ENCODE measurements at regions of chr1 and their contacts with region 1.

Region 1: GRCh38 chr1:204516180-204516879 is at the start of gene MDM4:
- DNase-seq: peak; percentile 91
- ATAC-seq: peak; percentile 80
- H3K4me3 Mint-ChIP-seq: no peak within 1 kb of the TSS
- H3K27ac Mint-ChIP-seq: no peak within 1 kb of the TSS
- H3K4me1 Mint-ChIP-seq: peaks cover 80% of the 10 kb centered on the region
- H3K27me3 Mint-ChIP-seq: no peaks in the 10 kb centered on the region
- CTCF ChIP-seq: no peak
- total RNA-seq, gene MDM4: 221 and 264 TPM in 2 replicates

Region 2: DNA sequence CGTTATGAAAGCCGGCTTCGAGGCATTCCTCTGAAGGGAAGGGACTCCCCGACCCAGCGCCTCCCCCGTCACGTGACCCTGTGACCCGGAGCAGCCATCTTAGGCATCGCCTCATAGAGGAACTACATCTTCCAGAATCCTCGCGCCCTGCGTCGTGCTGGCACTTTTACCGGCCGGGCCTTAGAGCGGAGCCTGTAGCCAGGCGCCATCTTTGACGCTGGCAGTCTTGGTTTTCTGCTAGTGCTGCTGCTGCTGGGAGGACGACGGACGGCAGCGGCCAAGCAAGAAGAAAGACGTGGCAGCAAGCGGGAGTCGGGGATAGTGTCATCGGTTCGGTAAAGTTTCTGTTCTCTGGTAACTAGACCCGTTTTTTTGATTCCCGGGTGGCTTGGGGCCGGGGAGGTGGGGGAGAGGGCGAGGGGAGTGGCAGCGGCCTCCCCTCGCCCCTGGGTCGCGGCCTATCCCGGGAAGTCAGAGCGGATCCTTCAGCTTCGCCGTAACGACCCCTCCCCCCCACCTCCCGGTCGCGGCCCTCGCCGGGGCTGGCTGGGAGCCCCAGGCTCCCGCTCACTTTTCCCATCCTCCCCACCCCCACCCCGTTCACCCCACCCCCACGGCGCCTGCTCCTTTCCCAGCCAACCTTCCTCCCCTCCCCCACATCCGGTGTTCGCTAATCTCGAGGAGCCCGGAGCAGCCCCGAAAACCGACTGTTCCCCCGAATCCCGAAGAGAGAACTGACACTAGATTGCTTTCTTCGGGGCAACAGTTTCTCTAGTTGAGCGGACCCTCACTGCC is 720.7 kb before region 1 on chr1 and contains the starts of genes ZBED6 and ZC3H11A:
- CTCF ChIA-PET with region 1: no interaction called
- POLR2A ChIA-PET with region 1: no interaction called
- intact Hi-C with region 1: loop called (anchors 10 kb)
- DNase-seq: peak; percentile 90
- ATAC-seq: peak; percentile 97
- H3K4me3 Mint-ChIP-seq: peak within 1 kb of the TSS; percentile 99
- H3K27ac Mint-ChIP-seq: peak within 1 kb of the TSS; percentile 95
- H3K4me1 Mint-ChIP-seq: peaks cover 51% of the 10 kb centered on the region
- H3K27me3 Mint-ChIP-seq: no peaks in the 10 kb centered on the region
- CTCF ChIP-seq: no peak
- total RNA-seq, gene ZBED6: 26.3 and 31.4 TPM in 2 replicates
- total RNA-seq, gene ZC3H11A: 85.6 and 91.6 TPM in 2 replicates

Region 3: GRCh38 chr1:204411451-204412204 is 104.7 kb before region 1 on chr1 and contains the start of gene PPP1R15B:
- CTCF ChIA-PET with region 1: no interaction called
- POLR2A ChIA-PET with region 1: interaction called, 6 read pairs
- intact Hi-C with region 1: loop called (anchors 1 kb)
- DNase-seq: peak; percentile 96
- ATAC-seq: peak; percentile 89
- H3K4me3 Mint-ChIP-seq: peak within 1 kb of the TSS; percentile 99
- H3K27ac Mint-ChIP-seq: peak within 1 kb of the TSS; percentile 99
- H3K4me1 Mint-ChIP-seq: peaks cover 29% of the 10 kb centered on the region
- H3K27me3 Mint-ChIP-seq: no peaks in the 10 kb centered on the region
- CTCF ChIP-seq: no peak
- total RNA-seq, gene PPP1R15B: 60.4 and 70.6 TPM in 2 replicates

Region 4: GRCh38 chr1:204453141-204453772 is 63.1 kb before region 1 on chr1:
- CTCF ChIA-PET with region 1: no interaction called
- POLR2A ChIA-PET with region 1: interaction called, 51 read pairs
- intact Hi-C with region 1: no loop called
- DNase-seq: peak; percentile 54
- ATAC-seq: peak; percentile 90
- H3K4me3 Mint-ChIP-seq: peak overlapping the region; percentile 69
- H3K27ac Mint-ChIP-seq: peak overlapping the region; percentile 88
- H3K4me1 Mint-ChIP-seq: peaks cover 96% of the 10 kb centered on the region
- H3K27me3 Mint-ChIP-seq: no peaks in the 10 kb centered on the region
- CTCF ChIP-seq: no peak

Region 5: DNA sequence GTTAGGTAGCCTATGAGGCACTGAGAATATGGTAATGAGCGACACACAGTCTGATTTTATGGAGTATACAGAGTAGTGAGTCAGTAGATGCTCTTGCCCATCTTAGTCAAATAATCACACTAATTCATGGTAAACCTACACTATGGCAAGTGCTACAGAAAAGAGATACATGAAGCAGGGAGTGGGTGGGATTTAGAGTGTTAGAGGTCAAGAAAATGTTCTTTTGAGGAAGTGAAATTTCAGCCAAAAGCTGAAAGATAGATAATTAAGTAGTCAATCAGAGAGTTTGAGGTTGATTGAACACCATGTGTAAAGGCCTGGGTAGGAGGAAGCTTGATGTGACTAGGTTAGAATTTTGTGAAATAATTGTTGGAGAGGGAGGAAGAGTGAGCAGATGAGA is 14.6 kb after region 1 on chr1:
- CTCF ChIA-PET with region 1: interaction called, 5 read pairs
- POLR2A ChIA-PET with region 1: interaction called, 71 read pairs
- intact Hi-C with region 1: loop called (anchors 1 kb)
- DNase-seq: no peak
- ATAC-seq: peak; percentile 86
- H3K4me3 Mint-ChIP-seq: no peak overlapping the region
- H3K27ac Mint-ChIP-seq: peak overlapping the region; percentile 55
- H3K4me1 Mint-ChIP-seq: peaks cover 26% of the 10 kb centered on the region
- H3K27me3 Mint-ChIP-seq: no peaks in the 10 kb centered on the region
- CTCF ChIP-seq: no peak

Region 6: DNA sequence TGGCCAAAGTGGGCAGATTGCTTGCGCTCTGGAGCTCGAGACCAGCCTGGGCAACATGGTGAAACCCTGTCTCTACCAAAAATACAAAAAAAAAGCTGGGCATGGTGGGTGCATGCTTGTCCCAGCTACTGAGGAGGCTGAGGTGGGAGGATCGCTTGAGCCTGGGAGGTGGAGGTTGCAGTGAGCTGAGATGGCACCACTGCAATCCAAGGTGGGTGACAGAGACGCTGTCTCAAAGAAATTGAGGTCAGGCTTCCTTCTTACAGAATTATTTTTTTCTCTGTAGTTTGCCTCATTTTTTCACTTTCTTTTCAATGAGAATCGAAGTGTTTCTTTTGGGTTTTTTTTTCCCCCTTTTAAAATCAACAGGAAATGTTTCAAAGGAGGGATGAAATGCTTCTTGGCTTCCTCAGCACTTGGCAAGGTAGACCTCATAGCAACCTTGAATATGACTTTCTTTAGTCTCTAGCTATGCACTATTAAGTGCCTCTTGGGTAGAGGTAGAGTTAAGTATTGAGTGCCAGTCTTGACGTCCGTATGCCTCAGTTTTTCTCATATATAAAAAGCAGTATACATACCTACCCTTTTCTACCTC is 40.2 kb after region 1 on chr1:
- CTCF ChIA-PET with region 1: no interaction called
- POLR2A ChIA-PET with region 1: no interaction called
- intact Hi-C with region 1: no loop called
- DNase-seq: no peak
- ATAC-seq: no peak
- H3K4me3 Mint-ChIP-seq: no peak overlapping the region
- H3K27ac Mint-ChIP-seq: no peak overlapping the region
- H3K4me1 Mint-ChIP-seq: peaks cover 28% of the 10 kb centered on the region
- H3K27me3 Mint-ChIP-seq: no peaks in the 10 kb centered on the region
- CTCF ChIP-seq: no peak

Region 7: GRCh38 chr1:205300886-205301821 is 784.8 kb after region 1 on chr1:
- CTCF ChIA-PET with region 1: no interaction called
- POLR2A ChIA-PET with region 1: interaction called, 15 read pairs
- intact Hi-C with region 1: no loop called
- DNase-seq: no peak
- ATAC-seq: peak; percentile 59
- H3K4me3 Mint-ChIP-seq: peak overlapping the region; percentile 46
- H3K27ac Mint-ChIP-seq: peak overlapping the region; percentile 78
- H3K4me1 Mint-ChIP-seq: peaks cover 69% of the 10 kb centered on the region
- H3K27me3 Mint-ChIP-seq: no peaks in the 10 kb centered on the region
- CTCF ChIP-seq: no peak